ENCODE measurements at regions of chrX and their contacts with region 1.

Region 1: GRCh38 chrX:71181910-71182799 is 37.5 kb downstream of the NLGN3 start:
- DNase-seq: peak; percentile 84
- ATAC-seq: peak; percentile 98

Region 2: GRCh38 chrX:69424161-69424560 is 1758.0 kb before region 1 on chrX:
- intact Hi-C with region 1: no loop called
- DNase-seq: no peak
- ATAC-seq: no peak

Region 3: DNA sequence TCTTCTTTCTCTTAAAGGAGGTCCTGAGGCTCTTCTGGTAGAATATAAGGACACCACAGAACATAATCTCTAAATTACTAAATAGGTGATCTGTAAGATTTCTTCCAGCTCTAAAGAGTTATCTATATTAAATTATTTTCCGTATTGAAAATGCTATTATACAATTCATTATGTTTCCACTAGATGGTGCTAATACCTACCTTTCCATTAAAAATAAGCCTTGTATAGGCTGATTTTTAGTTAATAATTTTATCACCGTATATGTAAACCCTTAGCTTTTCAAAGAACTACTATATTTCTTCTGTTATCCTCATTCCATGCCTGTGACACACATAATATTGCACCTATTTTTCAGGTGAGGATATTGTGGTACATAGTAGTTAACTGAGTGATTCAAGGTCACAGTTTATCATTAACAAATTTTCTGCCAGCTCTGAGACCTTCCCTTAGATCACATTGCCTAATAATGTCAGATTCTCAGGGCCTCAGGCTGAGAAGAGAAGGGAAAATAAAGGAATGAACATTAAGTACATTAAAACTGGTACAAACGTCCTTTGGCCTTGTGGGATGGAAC is 412.4 kb before region 1 on chrX:
- intact Hi-C with region 1: loop called (anchors 5 kb)
- DNase-seq: no peak
- ATAC-seq: no peak

Region 4: GRCh38 chrX:70998411-70999027 is 183.6 kb before region 1 on chrX:
- intact Hi-C with region 1: loop called (anchors 2 kb)
- DNase-seq: no peak
- ATAC-seq: no peak

Region 5: DNA sequence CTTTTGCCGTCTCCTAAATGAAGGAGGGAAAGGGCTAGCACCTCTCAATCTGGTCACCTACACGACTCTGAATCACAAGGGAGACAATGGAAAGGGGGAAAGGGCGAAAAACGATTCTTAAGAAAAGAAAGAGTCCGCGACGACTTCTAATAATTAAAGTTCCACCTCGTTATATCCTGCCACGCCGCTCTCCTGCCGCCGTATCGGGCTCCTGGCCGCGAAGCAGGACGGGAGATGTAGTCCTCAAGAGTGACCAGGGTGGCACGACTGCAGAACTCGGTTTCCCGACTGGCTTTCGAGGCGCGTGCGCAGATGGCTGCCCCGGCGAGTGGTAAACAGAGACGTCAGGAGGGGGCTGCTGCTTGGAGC is 86.6 kb before region 1 on chrX and contains the start of gene FOXO4:
- intact Hi-C with region 1: loop called (anchors 2 kb)
- DNase-seq: peak; percentile 95
- ATAC-seq: peak; percentile 96
- total RNA-seq, gene FOXO4: 52.7 TPM

Region 6: DNA sequence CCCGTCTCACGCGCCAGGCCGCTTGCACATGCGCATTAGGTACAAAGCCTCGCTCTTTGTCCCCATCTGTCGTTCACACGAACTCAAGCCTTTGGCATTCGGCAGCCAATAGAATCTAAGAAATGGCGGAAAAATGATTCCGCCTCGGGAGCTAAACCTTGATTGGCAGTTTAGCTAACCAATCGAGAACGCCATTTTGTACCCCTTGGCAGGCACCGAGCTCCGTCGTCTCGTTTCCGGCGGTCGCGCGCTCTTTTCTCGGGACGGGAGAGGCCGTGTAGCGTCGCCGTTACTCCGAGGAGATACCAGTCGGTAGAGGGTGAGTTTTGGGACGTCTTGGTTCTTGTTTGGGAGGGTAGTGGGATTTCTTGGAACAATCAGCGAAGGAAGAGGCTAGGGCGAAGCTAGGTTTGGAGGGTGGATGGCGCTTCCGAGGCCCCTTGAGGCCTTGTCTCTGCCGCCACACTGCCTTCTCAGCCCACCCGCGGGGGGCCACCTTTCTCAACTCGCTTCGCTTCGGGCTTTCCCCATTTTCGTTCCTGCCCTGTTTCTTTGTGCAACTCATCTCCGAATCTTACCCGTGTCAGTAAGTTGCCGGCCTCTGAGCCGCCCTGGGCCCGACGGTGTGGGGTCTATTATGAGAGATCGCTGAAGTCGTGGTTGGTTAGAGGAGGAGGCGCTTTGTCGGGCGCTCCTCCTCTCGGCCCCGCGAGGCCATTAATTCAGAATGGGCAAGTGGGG is 101.4 kb after region 1 on chrX and contains the start of gene NONO:
- intact Hi-C with region 1: loop called (anchors 2 kb)
- DNase-seq: peak; percentile 87
- ATAC-seq: peak; percentile 95
- total RNA-seq, gene NONO: 120 TPM

Measured in Right ventricle myocardium inferior (tissue), 1 donor.